ENCODE measurements at regions of chr11 and their contacts with region 1.

Region 1: DNA sequence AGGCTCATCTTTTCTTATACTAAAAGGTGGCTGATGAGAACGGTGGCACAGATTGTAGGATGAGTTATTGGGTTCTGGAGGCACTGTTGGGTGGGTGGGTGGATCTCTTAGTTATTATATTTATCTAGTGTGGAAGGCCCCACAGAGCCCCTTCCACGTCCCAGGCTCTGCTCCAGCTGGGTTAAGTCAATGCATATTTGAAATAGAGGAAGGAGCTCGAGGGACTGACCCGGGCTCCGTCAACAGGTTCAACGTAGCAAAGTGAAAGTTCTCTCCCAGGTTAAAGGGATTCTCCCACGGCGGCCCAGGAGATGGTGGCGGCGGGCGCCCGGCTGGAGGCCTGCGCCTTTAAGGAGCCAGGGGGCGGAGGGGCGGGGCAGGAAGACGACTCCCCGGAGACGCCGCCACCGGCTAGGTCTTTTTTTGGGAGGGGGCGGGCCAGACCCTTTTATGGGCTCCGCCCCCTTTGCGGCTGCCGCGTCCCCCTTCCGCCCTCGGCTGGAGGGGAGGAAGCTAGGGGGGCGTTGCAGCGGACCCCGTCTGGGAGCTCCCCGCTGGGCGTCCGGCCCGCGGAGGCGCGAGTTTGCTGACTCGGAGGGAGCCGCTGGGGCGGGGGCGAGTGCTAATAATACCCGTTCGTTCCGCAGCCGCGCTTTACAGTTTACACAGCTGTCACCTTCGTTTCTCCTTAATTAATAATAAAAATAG is 1.5 kb upstream of the INPPL1 start:
- DNase-seq: peak; percentile 94
- ATAC-seq: peak; percentile 75
- H3K4me3 ChIP-seq: peak overlapping the region; percentile 50 to 91 (median 81)
- H3K4me3 Mint-ChIP-seq: peak overlapping the region; percentile 93
- H3K27ac ChIP-seq: peak overlapping the region; percentile 83 to 89
- H3K27ac Mint-ChIP-seq: peak overlapping the region; percentile 96
- H3K4me1 ChIP-seq: peaks cover 29 to 44% of the 10 kb centered on the region in 2 donors
- H3K4me1 Mint-ChIP-seq: peaks cover 51% of the 10 kb centered on the region
- H3K27me3 ChIP-seq: no peaks in the 10 kb centered on the region
- H3K27me3 Mint-ChIP-seq: no peaks in the 10 kb centered on the region
- CTCF ChIP-seq: peak; percentile 29

Region 2: DNA sequence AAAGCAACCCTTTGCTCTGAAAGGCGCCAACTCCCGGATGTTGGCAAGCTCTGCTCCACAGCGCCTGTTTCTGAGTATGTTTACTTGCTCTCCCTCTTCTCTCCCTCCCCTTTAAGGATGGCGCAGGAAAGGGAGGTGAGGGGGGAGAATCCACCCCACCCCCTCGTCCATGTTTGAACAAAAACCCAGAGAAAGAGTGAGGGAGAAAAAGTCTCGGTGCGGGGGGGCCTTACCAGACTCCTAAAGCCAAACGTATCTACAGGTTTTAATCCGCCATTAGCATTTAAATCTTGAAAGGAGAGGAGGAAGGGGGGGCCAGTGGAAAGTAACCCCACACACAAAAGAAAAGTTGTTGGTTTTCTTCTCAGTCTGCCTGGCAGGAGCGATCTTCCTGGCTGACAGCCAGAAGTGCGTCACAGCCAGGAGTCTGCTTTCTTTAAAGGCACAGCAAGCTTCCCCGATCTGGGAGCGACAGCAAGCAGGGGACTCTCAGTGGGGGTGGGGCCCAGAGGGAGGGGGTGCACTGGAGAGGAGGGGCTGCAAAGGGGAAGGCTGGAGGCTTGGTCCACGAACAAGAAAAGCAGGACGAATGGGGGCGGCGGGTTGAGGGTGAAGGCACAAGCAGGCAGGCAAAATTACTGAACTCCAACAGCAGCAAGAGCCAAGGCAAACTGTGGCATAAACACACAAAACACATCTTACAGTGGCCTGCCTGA is 182.2 kb before region 1 on chr11:
- CTCF ChIA-PET with region 1: no interaction called
- POLR2A ChIA-PET with region 1: no interaction called
- intact Hi-C with region 1: loop called (anchors 2 kb)
- DNase-seq: peak; percentile 73
- ATAC-seq: peak; percentile 50
- H3K4me3 ChIP-seq: peak overlapping the region; percentile 72 to 86 (median 83)
- H3K4me3 Mint-ChIP-seq: no peak overlapping the region
- H3K27ac ChIP-seq: peak overlapping the region; percentile 72 to 92
- H3K27ac Mint-ChIP-seq: no peak overlapping the region
- H3K4me1 ChIP-seq: peaks cover 45 to 54% of the 10 kb centered on the region in 2 donors
- H3K4me1 Mint-ChIP-seq: peaks cover 30% of the 10 kb centered on the region
- H3K27me3 ChIP-seq: no peaks in the 10 kb centered on the region
- H3K27me3 Mint-ChIP-seq: no peaks in the 10 kb centered on the region
- CTCF ChIP-seq: no peak

Region 3: GRCh38 chr11:72112321-72113219 is 110.5 kb before region 1 on chr11 and contains the start of gene ANAPC15:
- CTCF ChIA-PET with region 1: no interaction called
- POLR2A ChIA-PET with region 1: interaction called, 6 read pairs
- intact Hi-C with region 1: loop called (anchors 1 kb)
- DNase-seq: peak; percentile 99
- ATAC-seq: peak; percentile 89
- H3K4me3 ChIP-seq: peak within 1 kb of the TSS; percentile 67 to 94 (median 78)
- H3K4me3 Mint-ChIP-seq: peak within 1 kb of the TSS; percentile 93
- H3K27ac ChIP-seq: peak within 1 kb of the TSS; percentile 95
- H3K27ac Mint-ChIP-seq: peak within 1 kb of the TSS; percentile 98
- H3K4me1 ChIP-seq: peaks cover 14 to 19% of the 10 kb centered on the region in 2 donors
- H3K4me1 Mint-ChIP-seq: peaks cover 20% of the 10 kb centered on the region
- H3K27me3 ChIP-seq: peaks cover 0 to 12% (median 0%) of the 10 kb centered on the region in 4 experiments
- H3K27me3 Mint-ChIP-seq: peaks cover 14% of the 10 kb centered on the region
- CTCF ChIP-seq: no peak
- total RNA-seq, gene ANAPC15: 27.1 and 29.2 TPM in 2 replicates

Region 4: GRCh38 chr11:72189461-72190275 is 33.4 kb before region 1 on chr11:
- CTCF ChIA-PET with region 1: interaction called, 20 read pairs
- POLR2A ChIA-PET with region 1: no interaction called
- intact Hi-C with region 1: no loop called
- DNase-seq: no peak
- ATAC-seq: no peak
- H3K4me3 ChIP-seq: no peak overlapping the region
- H3K4me3 Mint-ChIP-seq: no peak overlapping the region
- H3K27ac ChIP-seq: no peak overlapping the region
- H3K27ac Mint-ChIP-seq: no peak overlapping the region
- H3K4me1 ChIP-seq: no peaks in the 10 kb centered on the region
- H3K4me1 Mint-ChIP-seq: no peaks in the 10 kb centered on the region
- H3K27me3 ChIP-seq: no peaks in the 10 kb centered on the region
- H3K27me3 Mint-ChIP-seq: peaks cover under 1% of the 10 kb centered on the region
- CTCF ChIP-seq: no peak

Region 5: DNA sequence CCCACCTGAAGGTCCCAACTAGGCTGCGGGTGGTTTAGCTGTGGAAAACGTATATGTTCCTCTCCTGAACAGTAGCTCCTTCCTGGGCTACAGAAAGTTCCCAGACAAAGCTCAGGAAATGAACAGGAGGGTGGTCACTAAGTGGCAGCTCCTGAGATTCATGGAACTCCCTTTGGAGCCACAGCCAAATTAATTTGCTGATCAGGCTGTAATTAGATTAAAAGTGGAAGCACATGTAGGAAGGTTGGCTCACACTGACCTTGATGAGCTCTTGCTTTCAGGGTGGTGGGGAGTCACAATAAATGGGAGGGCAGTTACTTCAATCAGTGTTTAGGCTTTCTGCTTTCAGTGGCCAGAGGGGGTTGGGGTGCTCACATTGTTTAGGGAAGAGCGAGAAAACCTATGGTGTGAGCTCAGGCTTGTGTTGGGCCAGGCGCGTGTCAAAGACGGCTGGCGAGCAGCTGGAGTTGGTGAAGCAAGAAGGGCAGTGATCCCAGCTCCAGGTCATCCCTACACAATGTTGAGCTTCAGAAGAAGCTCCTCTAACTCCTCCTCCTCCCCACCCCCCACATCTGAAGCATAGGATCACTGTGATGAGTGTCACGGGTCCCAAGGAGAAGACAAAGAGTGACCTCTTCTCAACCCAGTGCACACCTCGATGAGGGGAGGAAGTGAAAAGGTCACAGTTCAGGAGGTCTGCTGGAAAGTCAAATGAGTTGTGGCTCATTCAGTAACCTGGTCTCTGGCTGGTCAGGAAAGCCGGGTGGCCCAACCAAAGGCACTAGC is 168.8 kb after region 1 on chr11:
- CTCF ChIA-PET with region 1: no interaction called
- POLR2A ChIA-PET with region 1: no interaction called
- intact Hi-C with region 1: no loop called
- DNase-seq: peak; percentile 17
- ATAC-seq: peak; percentile 43
- H3K4me3 ChIP-seq: no peak overlapping the region
- H3K4me3 Mint-ChIP-seq: no peak overlapping the region
- H3K27ac ChIP-seq: no peak overlapping the region
- H3K27ac Mint-ChIP-seq: peak overlapping the region; percentile 44
- H3K4me1 ChIP-seq: peaks cover 14 to 21% of the 10 kb centered on the region in 2 donors
- H3K4me1 Mint-ChIP-seq: peaks cover 31% of the 10 kb centered on the region
- H3K27me3 ChIP-seq: no peaks in the 10 kb centered on the region
- H3K27me3 Mint-ChIP-seq: no peaks in the 10 kb centered on the region
- CTCF ChIP-seq: no peak

Region 6: DNA sequence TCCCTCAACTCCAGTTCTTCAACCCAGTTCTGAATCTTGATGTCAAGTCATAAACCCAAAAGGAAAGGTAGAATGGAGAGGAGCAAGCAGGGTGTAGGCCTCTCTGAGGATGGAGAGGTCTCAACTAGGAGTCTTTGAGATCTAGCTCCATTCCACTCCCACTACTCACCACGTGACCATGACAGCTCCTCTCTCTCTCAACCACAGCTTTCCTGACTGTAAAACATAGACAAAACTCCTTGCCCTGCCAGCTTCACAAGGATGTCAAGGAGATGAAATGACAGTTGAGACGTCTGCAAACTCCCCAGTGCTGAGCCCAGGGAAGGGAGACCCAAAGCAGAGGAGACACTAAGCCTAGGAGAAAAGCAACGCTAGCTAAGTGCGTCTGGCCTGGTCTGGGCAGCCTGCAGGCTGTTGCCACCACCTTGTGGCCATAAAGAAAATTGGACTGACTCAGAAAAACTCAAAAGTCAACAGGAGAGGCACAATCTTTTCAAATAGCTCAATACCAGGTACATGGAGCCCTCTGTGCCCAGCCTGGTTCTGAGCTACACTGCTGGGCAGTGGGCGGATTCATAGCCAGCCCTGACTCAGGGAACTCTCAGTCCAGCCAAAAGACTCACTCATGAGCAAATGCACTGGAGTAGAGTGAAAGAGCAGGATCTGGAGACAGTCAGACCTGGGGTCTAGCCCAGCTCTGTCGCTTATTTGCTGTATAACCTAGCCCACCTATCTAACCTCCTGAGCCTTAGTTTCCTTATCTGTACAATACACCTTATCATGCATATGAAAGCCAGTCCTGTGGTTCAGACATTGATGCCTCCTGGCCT is 207.9 kb after region 1 on chr11:
- CTCF ChIA-PET with region 1: interaction called, 3 read pairs
- POLR2A ChIA-PET with region 1: interaction called, 4 read pairs
- intact Hi-C with region 1: loop called (anchors 5 kb)
- DNase-seq: peak; percentile 64
- ATAC-seq: no peak
- H3K4me3 ChIP-seq: no peak overlapping the region
- H3K4me3 Mint-ChIP-seq: no peak overlapping the region
- H3K27ac ChIP-seq: no peak overlapping the region
- H3K27ac Mint-ChIP-seq: peak overlapping the region; percentile 27
- H3K4me1 ChIP-seq: peaks cover 6 to 12% of the 10 kb centered on the region in 2 donors
- H3K4me1 Mint-ChIP-seq: peaks cover 30% of the 10 kb centered on the region
- H3K27me3 ChIP-seq: no peaks in the 10 kb centered on the region
- H3K27me3 Mint-ChIP-seq: no peaks in the 10 kb centered on the region
- CTCF ChIP-seq: peak; percentile 77

Region 7: GRCh38 chr11:72511393-72512047 is 288.5 kb after region 1 on chr11:
- CTCF ChIA-PET with region 1: no interaction called
- POLR2A ChIA-PET with region 1: no interaction called
- intact Hi-C with region 1: no loop called
- DNase-seq: no peak
- ATAC-seq: no peak
- H3K4me3 ChIP-seq: no peak overlapping the region
- H3K4me3 Mint-ChIP-seq: no peak overlapping the region
- H3K27ac ChIP-seq: no peak overlapping the region
- H3K27ac Mint-ChIP-seq: no peak overlapping the region
- H3K4me1 ChIP-seq: no peaks in the 10 kb centered on the region
- H3K4me1 Mint-ChIP-seq: no peaks in the 10 kb centered on the region
- H3K27me3 ChIP-seq: peaks cover 0 to 6% (median 2%) of the 10 kb centered on the region in 4 experiments
- H3K27me3 Mint-ChIP-seq: peaks cover 36% of the 10 kb centered on the region
- CTCF ChIP-seq: no peak

Region 8: GRCh38 chr11:73597956-73598718 is 1375.1 kb after region 1 on chr11 and contains the start of gene FAM168A:
- CTCF ChIA-PET with region 1: no interaction called
- POLR2A ChIA-PET with region 1: no interaction called
- intact Hi-C with region 1: loop called (anchors 10 kb)
- DNase-seq: peak; percentile 96
- ATAC-seq: peak; percentile 92
- H3K4me3 ChIP-seq: peak within 1 kb of the TSS; percentile 68 to 91 (median 71)
- H3K4me3 Mint-ChIP-seq: peak within 1 kb of the TSS; percentile 91
- H3K27ac ChIP-seq: peak within 1 kb of the TSS; percentile 77 to 78
- H3K27ac Mint-ChIP-seq: peak within 1 kb of the TSS; percentile 92
- H3K4me1 ChIP-seq: peaks cover 8 to 15% of the 10 kb centered on the region in 2 donors
- H3K4me1 Mint-ChIP-seq: peaks cover 32% of the 10 kb centered on the region
- H3K27me3 ChIP-seq: no peaks in the 10 kb centered on the region
- H3K27me3 Mint-ChIP-seq: no peaks in the 10 kb centered on the region
- CTCF ChIP-seq: peak; percentile 34
- total RNA-seq, gene FAM168A: 23.3 and 26.8 TPM in 2 replicates